ENCODE measurements at regions of chr17 and their contacts with region 1.

Region 1: GRCh38 chr17:48816774-48817590 is at the start of gene TTLL6:
- DNase-seq: no peak
- H3K4me3 ChIP-seq: peak within 1 kb of the TSS; percentile 37
- H3K27me3 ChIP-seq: peaks cover 12% of the 10 kb centered on the region
- CTCF ChIP-seq: no peak
- polyA plus RNA-seq, gene TTLL6: 0.02 TPM in 1 of 2 replicates, not detected in the other

Region 2: GRCh38 chr17:48770954-48771353 is 46.0 kb before region 1 on chr17:
- CTCF ChIA-PET with region 1: no interaction called
- POLR2A ChIA-PET with region 1: no interaction called
- DNase-seq: no peak
- H3K4me3 ChIP-seq: no peak overlapping the region
- H3K27me3 ChIP-seq: no peaks in the 10 kb centered on the region; the same call in none of the 2 replicates
- CTCF ChIP-seq: no peak

Region 3: DNA sequence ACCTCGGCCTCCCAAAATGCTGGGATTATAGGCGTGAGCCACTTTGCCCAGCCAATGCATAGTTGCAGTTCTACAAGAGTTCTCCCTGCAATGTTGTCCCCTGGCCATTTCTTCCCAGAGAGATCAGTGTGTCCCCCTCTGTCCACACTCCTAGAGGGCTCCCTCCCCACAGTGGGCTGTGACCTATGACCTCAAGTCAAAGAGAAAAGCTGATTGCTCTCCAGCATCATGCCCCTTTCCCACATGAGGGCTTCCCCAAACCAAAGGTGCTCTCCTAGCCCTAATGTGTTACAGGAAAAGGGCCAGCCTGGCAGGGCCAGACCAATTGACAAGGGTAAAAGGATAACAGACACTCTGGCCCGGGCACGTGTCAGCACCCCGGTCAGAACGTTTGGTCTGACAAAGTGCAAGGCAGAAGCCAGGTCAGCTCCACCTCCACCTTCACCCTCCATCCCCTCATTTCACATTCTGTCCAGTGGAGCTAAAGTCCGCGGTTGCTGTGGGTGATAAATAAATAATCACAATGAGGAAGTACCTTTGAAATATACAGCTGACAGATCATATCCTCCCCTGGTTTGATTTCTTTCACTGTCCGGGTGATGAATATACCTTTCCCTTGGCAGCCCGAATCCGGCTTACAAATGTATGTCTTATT is 17.8 kb before region 1 on chr17:
- CTCF ChIA-PET with region 1: interaction called, 76 read pairs
- POLR2A ChIA-PET with region 1: interaction called, 5 read pairs
- DNase-seq: no peak
- H3K4me3 ChIP-seq: no peak overlapping the region
- H3K27me3 ChIP-seq: peaks cover 4% of the 10 kb centered on the region
- CTCF ChIP-seq: no peak

Region 4: DNA sequence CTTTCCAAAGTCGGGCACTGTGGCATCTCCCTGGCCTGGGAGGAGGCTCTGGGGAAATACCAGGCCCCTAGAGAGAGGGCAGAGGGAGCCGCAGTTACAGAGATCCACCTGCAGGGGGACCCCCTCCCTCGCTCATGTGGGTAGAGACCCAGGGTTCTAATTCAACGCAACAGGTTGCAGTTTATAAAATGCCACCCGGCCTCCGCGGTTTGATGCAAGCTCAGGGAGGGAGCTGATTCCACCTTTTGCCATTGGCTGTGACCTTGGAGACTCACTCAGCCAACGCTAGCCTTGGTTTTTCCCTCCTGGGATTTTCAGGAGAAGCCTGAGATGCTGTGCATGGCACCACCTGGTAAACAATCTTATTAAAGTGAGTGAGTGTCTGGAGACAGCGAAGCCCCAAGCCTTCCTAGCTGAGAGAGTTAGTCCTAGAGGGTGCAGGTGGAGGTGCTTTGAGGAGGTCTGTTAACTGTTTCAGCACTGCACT is 12.0 kb before region 1 on chr17:
- CTCF ChIA-PET with region 1: interaction called, 76 read pairs
- POLR2A ChIA-PET with region 1: interaction called, 5 read pairs
- DNase-seq: no peak
- H3K4me3 ChIP-seq: no peak overlapping the region
- H3K27me3 ChIP-seq: peaks cover under 1% of the 10 kb centered on the region
- CTCF ChIP-seq: peak; percentile 97

Region 5: DNA sequence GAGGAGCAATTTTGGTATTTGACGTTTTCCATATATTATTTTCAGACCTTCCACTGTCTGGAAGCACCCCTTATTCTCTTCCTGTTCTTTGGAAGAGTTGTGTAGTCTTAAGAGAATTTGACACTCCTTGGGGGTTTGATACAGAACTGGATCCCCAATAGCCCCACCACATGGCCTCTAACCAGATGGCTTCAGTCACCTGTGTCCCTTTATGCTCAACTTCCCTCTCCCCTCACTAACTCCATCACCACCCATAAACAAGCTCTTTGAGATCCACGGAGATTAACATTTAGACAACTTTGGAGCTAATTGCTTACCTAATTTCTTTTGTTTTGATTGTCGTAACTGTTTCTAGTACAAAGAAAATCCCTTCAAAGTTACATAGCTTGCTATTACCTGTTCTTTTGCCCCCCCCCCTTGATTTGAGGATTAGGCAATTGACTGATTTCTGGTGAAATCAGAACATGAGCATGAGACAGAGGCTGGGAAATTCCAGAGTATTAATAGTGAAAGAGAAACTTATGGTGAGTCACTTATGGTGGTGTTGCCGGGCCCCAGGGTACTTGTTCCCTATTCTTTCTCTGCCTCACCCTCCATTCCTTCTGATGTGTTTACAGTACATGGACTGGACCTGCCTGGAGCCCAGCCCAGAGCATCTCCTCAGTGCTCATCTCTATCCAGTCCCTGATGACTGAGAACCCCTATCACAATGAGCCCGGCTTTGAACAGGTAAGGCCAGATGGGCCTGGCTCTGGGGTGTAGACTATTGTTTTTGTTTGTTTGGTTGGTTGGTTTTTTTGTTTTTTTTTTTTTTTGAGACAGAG is 98.7 kb after region 1 on chr17:
- CTCF ChIA-PET with region 1: no interaction called
- POLR2A ChIA-PET with region 1: no interaction called
- DNase-seq: peak; percentile 78
- H3K4me3 ChIP-seq: no peak overlapping the region
- H3K27me3 ChIP-seq: no peaks in the 10 kb centered on the region
- CTCF ChIP-seq: no peak